CD4-positive, alpha-beta memory T cell (primary cell): ENCODE measurements at regions of chr16 and their contacts with region 1.

Region 1: DNA sequence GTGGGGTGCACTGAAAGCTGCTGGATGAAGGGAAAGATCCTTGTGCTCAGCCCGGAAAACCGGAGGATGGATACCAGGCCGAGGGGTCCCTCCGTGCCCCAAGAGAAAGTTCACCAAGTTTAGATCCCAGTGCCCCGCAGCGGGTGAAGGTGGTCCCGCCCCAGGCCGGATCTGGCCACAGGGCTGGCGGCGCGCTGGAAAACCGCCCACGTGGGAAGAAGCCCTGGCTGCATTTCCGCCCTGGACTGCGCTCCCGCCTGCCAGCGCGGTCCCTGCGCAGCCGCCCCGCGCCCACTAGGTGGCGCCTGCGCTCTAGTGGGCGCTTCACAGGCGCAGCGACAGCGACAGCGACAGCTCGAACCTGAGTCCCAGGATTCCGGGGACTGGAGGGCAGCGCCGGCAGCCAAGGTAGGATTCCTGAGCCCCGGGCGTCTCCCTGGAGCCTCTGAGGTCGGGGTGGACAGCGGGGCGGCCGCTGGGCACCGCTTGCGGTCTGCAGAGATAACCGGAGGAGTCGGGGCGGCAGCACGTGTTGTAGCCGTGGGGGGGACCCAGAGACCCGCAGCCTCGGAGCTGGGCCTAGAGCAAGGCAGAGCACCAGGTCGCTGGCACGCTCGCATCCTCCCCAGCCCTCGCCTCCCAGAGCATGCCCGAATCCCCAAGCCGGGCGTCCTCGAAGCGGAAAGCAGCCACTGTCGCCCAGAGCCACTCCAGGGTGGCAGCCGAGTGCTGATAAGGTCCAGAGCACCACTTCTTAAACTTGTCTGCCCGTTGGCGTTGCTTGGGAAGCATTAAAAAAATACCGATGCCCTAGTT is at the start of gene CHD9:
- DNase-seq: peak; percentile 69 to 82 (median 77)
- H3K4me3 ChIP-seq: peak within 1 kb of the TSS; percentile 57 to 87
- H3K4me3 Mint-ChIP-seq: peak within 1 kb of the TSS; percentile 70 to 95 (median 86)
- H3K27ac ChIP-seq: peak within 1 kb of the TSS; percentile 53
- H3K27ac Mint-ChIP-seq: peak within 1 kb of the TSS; percentile 31 to 94 (median 73)
- H3K4me1 ChIP-seq: peaks cover 21% of the 10 kb centered on the region
- H3K4me1 Mint-ChIP-seq: peaks cover 9 to 37% (median 13%) of the 10 kb centered on the region in 4 donors
- H3K27me3 ChIP-seq: no peaks in the 10 kb centered on the region
- H3K27me3 Mint-ChIP-seq: no peaks in the 10 kb centered on the region
- total RNA-seq, gene CHD9: 47.0 to 49.7 TPM

Region 2: GRCh38 chr16:52976539-52977167 is 78.2 kb before region 1 on chr16:
- CTCF ChIA-PET with region 1: no interaction called
- POLR2A ChIA-PET with region 1: no interaction called
- intact Hi-C with region 1: no loop called
- DNase-seq: peak in 1 of 5 donors; percentile 2
- H3K4me3 ChIP-seq: no peak overlapping the region
- H3K4me3 Mint-ChIP-seq: no peak overlapping the region
- H3K27ac ChIP-seq: no peak overlapping the region
- H3K27ac Mint-ChIP-seq: no peak overlapping the region
- H3K4me1 ChIP-seq: no peaks in the 10 kb centered on the region
- H3K4me1 Mint-ChIP-seq: no peaks in the 10 kb centered on the region
- H3K27me3 ChIP-seq: no peaks in the 10 kb centered on the region
- H3K27me3 Mint-ChIP-seq: peaks cover 19 to 20% of the 10 kb centered on the region in 2 donors

Region 3: GRCh38 chr16:53099318-53100130 is 44.6 kb after region 1 on chr16:
- CTCF ChIA-PET with region 1: interaction called, 20 read pairs
- POLR2A ChIA-PET with region 1: interaction called, 11 read pairs
- intact Hi-C with region 1: loop called (anchors 1 kb)
- DNase-seq: peak; percentile 51 to 82 (median 53)
- H3K4me3 ChIP-seq: peak overlapping the region; percentile 37 to 53
- H3K4me3 Mint-ChIP-seq: peak overlapping the region; percentile 90 to 97 (median 94)
- H3K27ac ChIP-seq: peak overlapping the region; percentile 69
- H3K27ac Mint-ChIP-seq: peak overlapping the region; percentile 88 to 99 (median 94)
- H3K4me1 ChIP-seq: peaks cover 30% of the 10 kb centered on the region
- H3K4me1 Mint-ChIP-seq: peaks cover 19 to 40% (median 28%) of the 10 kb centered on the region in 4 donors
- H3K27me3 ChIP-seq: no peaks in the 10 kb centered on the region
- H3K27me3 Mint-ChIP-seq: no peaks in the 10 kb centered on the region

Region 4: DNA sequence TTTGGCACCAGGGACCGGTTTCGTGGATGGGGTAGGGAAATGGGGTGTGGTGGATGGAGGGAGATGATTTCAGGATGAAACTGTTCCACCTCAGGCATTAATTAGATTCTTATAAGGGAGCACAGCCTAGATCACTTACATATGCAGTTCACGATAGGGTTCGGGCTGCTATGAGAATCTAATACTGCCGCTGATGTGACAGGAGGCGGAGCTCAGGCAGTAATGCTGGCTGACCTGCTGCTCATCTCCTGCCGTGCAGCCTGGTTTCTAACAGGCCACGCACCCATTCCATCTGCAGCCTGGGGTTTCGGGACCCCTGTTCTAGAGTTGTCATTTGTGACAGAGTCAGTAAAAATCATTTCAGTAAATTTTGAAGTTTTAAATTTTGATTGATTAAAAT is 99.6 kb after region 1 on chr16:
- CTCF ChIA-PET with region 1: interaction called, 93 read pairs
- POLR2A ChIA-PET with region 1: interaction called, 4 read pairs
- intact Hi-C with region 1: no loop called
- DNase-seq: no peak
- H3K4me3 ChIP-seq: no peak overlapping the region
- H3K4me3 Mint-ChIP-seq: no peak overlapping the region
- H3K27ac ChIP-seq: no peak overlapping the region
- H3K27ac Mint-ChIP-seq: peak overlapping the region in 2 of 7 donors; percentile 34 to 50
- H3K4me1 ChIP-seq: no peaks in the 10 kb centered on the region
- H3K4me1 Mint-ChIP-seq: peaks cover 0 to 9% (median 4%) of the 10 kb centered on the region in 4 donors
- H3K27me3 ChIP-seq: no peaks in the 10 kb centered on the region
- H3K27me3 Mint-ChIP-seq: no peaks in the 10 kb centered on the region

Region 5: DNA sequence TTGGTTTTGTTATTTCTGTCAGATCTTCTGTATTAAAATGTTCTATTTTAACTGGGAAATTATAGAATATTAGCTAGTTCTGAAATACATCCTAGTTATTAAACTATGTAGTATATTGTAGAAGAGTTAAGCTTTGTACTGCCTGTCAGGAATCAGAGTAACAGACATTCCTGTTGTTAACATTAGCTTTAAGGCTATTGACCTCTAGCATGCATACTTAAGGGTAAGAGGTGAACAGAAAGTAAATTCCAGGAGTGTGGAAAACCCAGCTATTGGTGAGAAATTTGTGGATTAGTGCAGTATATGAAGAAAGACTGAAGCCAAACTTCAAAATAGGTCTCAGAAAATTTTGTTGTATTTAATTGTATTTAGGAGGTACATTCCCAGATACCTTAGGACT is 111.2 kb after region 1 on chr16:
- CTCF ChIA-PET with region 1: interaction called, 93 read pairs
- POLR2A ChIA-PET with region 1: no interaction called
- intact Hi-C with region 1: no loop called
- DNase-seq: no peak
- H3K4me3 ChIP-seq: no peak overlapping the region
- H3K4me3 Mint-ChIP-seq: no peak overlapping the region
- H3K27ac ChIP-seq: no peak overlapping the region
- H3K27ac Mint-ChIP-seq: no peak overlapping the region
- H3K4me1 ChIP-seq: no peaks in the 10 kb centered on the region
- H3K4me1 Mint-ChIP-seq: peaks cover 0 to 18% (median 8%) of the 10 kb centered on the region in 4 donors
- H3K27me3 ChIP-seq: no peaks in the 10 kb centered on the region
- H3K27me3 Mint-ChIP-seq: no peaks in the 10 kb centered on the region

Region 6: GRCh38 chr16:53220585-53220984 is 165.7 kb after region 1 on chr16:
- CTCF ChIA-PET with region 1: interaction called, 4 read pairs
- POLR2A ChIA-PET with region 1: no interaction called
- intact Hi-C with region 1: loop called (anchors 1 kb)
- DNase-seq: no peak
- H3K4me3 ChIP-seq: no peak overlapping the region
- H3K4me3 Mint-ChIP-seq: no peak overlapping the region
- H3K27ac ChIP-seq: no peak overlapping the region
- H3K27ac Mint-ChIP-seq: no peak overlapping the region
- H3K4me1 ChIP-seq: no peaks in the 10 kb centered on the region
- H3K4me1 Mint-ChIP-seq: peaks cover 0 to 4% (median 2%) of the 10 kb centered on the region in 4 donors
- H3K27me3 ChIP-seq: no peaks in the 10 kb centered on the region
- H3K27me3 Mint-ChIP-seq: no peaks in the 10 kb centered on the region

Region 7: DNA sequence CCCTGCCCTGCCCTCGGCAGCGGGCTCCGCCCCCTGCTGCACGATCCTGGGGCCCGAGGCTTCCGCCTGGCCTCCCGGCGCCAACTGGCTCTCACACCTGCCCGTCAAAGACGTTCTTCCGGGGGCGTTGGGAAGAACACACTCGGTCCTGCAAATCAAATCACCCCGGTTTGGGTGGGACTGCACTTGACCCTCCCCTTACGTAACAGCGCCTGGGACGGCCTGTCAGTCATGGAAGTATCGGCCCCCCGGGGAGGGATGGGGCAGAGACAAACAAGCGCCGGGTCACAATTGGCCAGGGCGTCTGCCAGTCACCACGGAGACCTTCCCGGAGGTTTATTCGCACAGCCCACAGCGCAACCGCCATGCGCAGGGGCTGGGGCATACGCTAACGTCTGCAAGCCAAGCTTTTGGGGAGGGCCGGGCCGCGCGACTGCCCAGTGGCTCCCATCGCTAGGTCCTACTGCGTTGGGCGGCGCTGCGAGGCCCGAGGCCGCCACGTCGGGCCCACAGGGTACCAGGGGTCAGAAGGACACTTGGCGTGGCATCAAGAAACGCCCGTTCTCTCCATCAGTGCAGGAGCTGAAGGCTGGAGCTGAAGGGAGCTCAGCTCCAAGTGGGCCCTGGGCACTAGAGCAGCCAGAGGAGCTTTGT is 448.5 kb after region 1 on chr16:
- CTCF ChIA-PET with region 1: interaction called, 4 read pairs
- POLR2A ChIA-PET with region 1: interaction called, 13 read pairs
- intact Hi-C with region 1: loop called (anchors 1 kb)
- DNase-seq: peak; percentile 99 to 100 (median 100)
- H3K4me3 ChIP-seq: peak overlapping the region; percentile 40 to 83
- H3K4me3 Mint-ChIP-seq: peak overlapping the region; percentile 90 to 95 (median 92)
- H3K27ac ChIP-seq: peak overlapping the region; percentile 76
- H3K27ac Mint-ChIP-seq: peak overlapping the region; percentile 87 to 94 (median 91)
- H3K4me1 ChIP-seq: peaks cover 52% of the 10 kb centered on the region
- H3K4me1 Mint-ChIP-seq: peaks cover 38 to 61% (median 50%) of the 10 kb centered on the region in 4 donors
- H3K27me3 ChIP-seq: no peaks in the 10 kb centered on the region
- H3K27me3 Mint-ChIP-seq: no peaks in the 10 kb centered on the region